Left cardiac atrium (tissue), 4 donors: ENCODE measurements at regions of chr16 and their contacts with region 1.

Region 1: GRCh38 chr16:4936991-4937781 is at the start of gene PPL:
- DNase-seq: peak; percentile 56
- ATAC-seq: peak; percentile 45 to 69
- total RNA-seq, gene PPL: 6.1 to 15.8 TPM

Region 2: GRCh38 chr16:4882633-4883285 is 54.4 kb before region 1 on chr16:
- intact Hi-C with region 1: loop called in 1 of 2 experiments (anchors 10 kb)
- DNase-seq: peak; percentile 58
- ATAC-seq: peak; percentile 60 to 79

Region 3: DNA sequence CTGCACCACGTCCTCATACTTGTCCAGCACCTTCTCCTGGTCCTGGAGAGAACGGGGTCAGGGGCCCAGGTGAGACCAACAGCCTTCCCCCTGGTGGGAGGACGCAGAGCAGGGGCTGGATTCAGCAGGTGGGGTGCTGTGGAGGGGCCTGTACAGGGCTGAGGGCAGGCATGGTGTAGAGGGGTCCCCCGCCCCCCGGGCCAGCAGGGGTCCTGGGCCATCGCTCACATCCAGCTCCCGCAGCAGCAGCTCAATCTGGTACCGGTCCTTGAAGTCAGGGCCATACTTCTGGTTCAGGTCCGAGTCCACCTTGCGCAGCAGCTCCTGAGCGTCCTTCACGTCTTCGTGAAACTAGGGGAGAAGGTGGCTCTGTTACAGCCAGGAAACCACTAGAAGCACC is 41.8 kb before region 1 on chr16:
- intact Hi-C with region 1: no loop called
- DNase-seq: no peak
- ATAC-seq: no peak